ENCODE measurements at regions of chr11 and their contacts with region 1.

Region 1: DNA sequence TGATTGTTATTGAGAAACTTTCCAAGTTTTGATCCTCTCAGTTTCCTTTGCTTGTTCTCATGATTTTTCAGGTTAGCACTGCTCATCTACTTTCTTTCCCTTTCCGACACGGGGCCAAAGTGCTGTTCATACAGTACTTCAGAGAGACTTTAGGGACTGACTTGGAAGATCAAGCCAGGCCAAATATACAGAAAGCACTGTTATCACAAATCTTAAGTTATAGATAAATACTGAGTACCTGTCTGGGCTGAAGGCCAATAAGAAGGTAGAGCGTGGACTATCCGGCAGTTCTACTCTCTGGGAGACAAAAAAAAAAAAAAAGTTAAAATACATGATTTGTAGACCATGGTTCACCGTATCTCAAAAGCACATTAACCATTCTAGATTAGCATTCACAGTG is 46.2 kb downstream of the AMBRA1 start:
- DNase-seq: no peak
- ATAC-seq: no peak
- H3K4me3 ChIP-seq: no peak overlapping the region
- H3K27ac ChIP-seq: no peak overlapping the region
- H3K4me1 ChIP-seq: peaks cover 15 to 22% of the 10 kb centered on the region in 2 donors
- H3K27me3 ChIP-seq: no peaks in the 10 kb centered on the region
- CTCF ChIP-seq: no peak
- POLR2A ChIP-seq: no peak

Region 2: GRCh38 chr11:46601129-46601528 is 53.5 kb after region 1 on chr11:
- in situ Hi-C with region 1: loop called in 1 of 4 experiments (anchors 5 kb)
- intact Hi-C with region 1: no loop called
- DNase-seq: no peak
- ATAC-seq: peak; percentile 69 to 83
- H3K4me3 ChIP-seq: no peak overlapping the region
- H3K27ac ChIP-seq: peak overlapping the region; percentile 33 to 51 (median 44)
- H3K4me1 ChIP-seq: peaks cover 0 to 16% of the 10 kb centered on the region in 2 donors
- H3K27me3 ChIP-seq: no peaks in the 10 kb centered on the region
- CTCF ChIP-seq: no peak
- POLR2A ChIP-seq: no peak

Region 3: GRCh38 chr11:46800177-46800576 is 252.6 kb after region 1 on chr11:
- in situ Hi-C with region 1: no loop called
- intact Hi-C with region 1: no loop called
- DNase-seq: no peak
- ATAC-seq: peak; percentile 99 to 100
- H3K4me3 ChIP-seq: no peak overlapping the region
- H3K27ac ChIP-seq: peak overlapping the region; percentile 76 to 89 (median 85)
- H3K4me1 ChIP-seq: peaks cover 13 to 24% of the 10 kb centered on the region in 2 donors
- H3K27me3 ChIP-seq: no peaks in the 10 kb centered on the region
- CTCF ChIP-seq: no peak
- POLR2A ChIP-seq: no peak

Measured in gastrocnemius medialis (tissue), 4 donors.